Esophagus muscularis mucosa (tissue), 4 donors: ENCODE measurements at regions of chr20 and their contacts with region 1.

Region 1: DNA sequence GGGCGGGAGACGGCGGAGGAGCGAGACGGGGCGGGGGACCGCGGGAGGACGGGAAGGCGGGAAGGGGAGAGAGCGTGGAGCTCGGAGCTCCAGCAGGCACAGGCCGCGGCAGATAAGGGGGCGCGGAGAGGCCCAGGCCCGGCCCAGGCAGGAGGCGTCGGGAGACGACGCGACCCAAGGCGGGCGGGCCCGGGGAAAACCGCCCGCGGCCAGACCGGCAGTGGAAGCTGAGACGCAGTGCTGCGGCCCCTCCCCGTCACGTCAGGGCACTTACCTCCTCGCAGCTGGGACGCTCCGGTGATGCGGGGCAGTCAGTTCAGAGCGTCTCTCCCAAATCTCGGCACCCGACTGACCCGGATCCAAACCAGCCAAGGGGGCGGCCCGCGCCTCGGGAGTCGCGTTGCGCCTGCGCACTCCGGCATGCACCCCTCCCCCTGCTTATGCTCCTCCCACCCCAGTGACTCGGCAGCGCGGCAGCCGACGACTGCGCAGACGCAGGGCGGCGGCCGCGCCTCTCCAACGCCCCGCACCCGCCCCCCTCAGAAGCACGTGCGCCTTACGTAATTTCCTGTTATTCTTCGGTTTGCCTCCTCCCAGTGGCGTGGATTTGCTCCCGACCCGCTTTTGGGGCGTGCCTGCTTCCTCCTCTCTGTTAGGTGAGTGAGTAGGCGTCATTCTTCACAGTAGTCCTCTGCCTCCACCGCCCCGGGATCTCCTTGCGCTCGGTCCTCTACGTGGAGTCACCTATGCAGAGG is at the start of gene OSER1:
- DNase-seq: peak; percentile 100
- H3K4me3 ChIP-seq: peak within 1 kb of the TSS; percentile 81 to 94 (median 92)
- H3K27ac ChIP-seq: peak within 1 kb of the TSS; percentile 96 to 99 (median 98)
- H3K4me1 ChIP-seq: peaks cover 51 to 71% (median 57%) of the 10 kb centered on the region in 4 donors
- H3K27me3 ChIP-seq: no peaks in the 10 kb centered on the region
- CTCF ChIP-seq: peak in 1 of 3 experiments; percentile 16
- EP300 ChIP-seq: no peak
- POLR2A ChIP-seq: peak; percentile 93
- total RNA-seq, gene OSER1: 45.2 to 94.4 (median 71.0) TPM

Region 2: DNA sequence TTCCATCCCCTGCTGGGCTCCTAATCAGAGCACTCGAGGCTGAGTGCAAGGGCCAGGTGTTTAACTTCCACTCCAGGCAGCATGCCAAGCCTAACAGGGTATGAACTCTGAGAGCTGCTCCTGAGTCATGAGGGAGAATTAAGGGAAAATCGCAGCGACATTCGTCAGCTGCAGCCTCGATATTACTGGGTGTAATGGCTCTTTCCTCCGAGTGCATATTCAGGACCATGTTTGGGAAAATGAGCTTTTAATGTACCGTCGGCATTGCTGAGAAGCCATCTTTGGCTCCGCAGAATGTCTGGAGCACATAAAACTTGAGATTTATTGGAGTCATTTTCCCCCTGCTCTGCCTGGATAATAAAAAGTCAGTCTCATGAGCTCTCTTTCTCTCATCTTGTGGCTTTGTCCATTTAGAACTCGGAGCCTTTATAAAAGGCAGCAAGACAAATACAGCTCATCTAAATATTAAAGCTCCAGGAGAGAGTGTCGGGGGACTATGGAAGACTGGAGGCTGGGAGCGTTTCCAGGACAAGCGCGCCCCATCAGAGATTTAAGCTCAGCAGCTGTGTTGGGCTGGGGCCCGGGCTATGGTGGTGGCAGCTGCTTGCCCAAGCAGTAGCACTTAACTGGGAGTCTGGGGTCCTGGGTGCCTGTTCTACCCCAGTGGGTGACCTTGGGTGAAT is 192.2 kb before region 1 on chr20:
- intact Hi-C with region 1: loop called (anchors 10 kb)
- DNase-seq: no peak
- H3K4me3 ChIP-seq: peak overlapping the region in 3 of 4 donors; percentile 12 to 29 (median 26)
- H3K27ac ChIP-seq: peak overlapping the region; percentile 64 to 89 (median 77)
- H3K4me1 ChIP-seq: peaks cover 3 to 65% (median 64%) of the 10 kb centered on the region in 4 donors
- H3K27me3 ChIP-seq: no peaks in the 10 kb centered on the region
- CTCF ChIP-seq: no peak
- EP300 ChIP-seq: no peak
- POLR2A ChIP-seq: no peak

Region 3: DNA sequence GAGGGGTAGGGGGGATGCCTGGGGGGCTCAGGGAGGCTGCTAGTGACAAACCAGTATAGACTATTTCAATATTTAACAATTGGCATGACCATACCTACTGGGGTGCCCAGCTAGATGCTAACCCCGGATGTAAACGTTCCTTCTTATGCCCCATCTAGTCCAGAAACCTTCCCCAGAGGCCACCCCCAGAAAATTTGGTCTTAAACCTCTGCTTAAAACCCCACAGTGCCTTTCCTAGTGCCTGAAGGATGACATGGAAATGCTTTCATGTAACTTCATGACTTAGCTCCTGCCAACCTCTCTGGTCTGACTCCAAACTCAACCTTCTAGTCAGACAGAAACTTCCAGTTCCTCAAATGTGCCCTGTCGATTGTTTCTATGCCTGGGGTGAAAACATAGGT is 75.6 kb before region 1 on chr20:
- intact Hi-C with region 1: no loop called
- DNase-seq: no peak
- H3K4me3 ChIP-seq: no peak overlapping the region
- H3K27ac ChIP-seq: peak overlapping the region; percentile 85 to 95 (median 92)
- H3K4me1 ChIP-seq: peaks cover 37 to 78% (median 66%) of the 10 kb centered on the region in 4 donors
- H3K27me3 ChIP-seq: no peaks in the 10 kb centered on the region
- CTCF ChIP-seq: no peak
- EP300 ChIP-seq: no peak
- POLR2A ChIP-seq: no peak

Region 4: GRCh38 chr20:44279228-44279627 is 68.6 kb after region 1 on chr20:
- intact Hi-C with region 1: no loop called
- DNase-seq: no peak
- H3K4me3 ChIP-seq: no peak overlapping the region
- H3K27ac ChIP-seq: no peak overlapping the region
- H3K4me1 ChIP-seq: no peaks in the 10 kb centered on the region
- H3K27me3 ChIP-seq: no peaks in the 10 kb centered on the region
- CTCF ChIP-seq: no peak
- EP300 ChIP-seq: no peak
- POLR2A ChIP-seq: no peak

Region 5: GRCh38 chr20:44388466-44389023 is 177.9 kb after region 1 on chr20:
- intact Hi-C with region 1: loop called (anchors 10 kb)
- DNase-seq: no peak
- H3K4me3 ChIP-seq: peak overlapping the region in 1 of 4 donors; percentile 7
- H3K27ac ChIP-seq: no peak overlapping the region
- H3K4me1 ChIP-seq: peaks cover 0 to 9% (median 8%) of the 10 kb centered on the region in 4 donors
- H3K27me3 ChIP-seq: peaks cover 0 to 55% (median 0%) of the 10 kb centered on the region in 4 donors
- CTCF ChIP-seq: peak; percentile 49 to 84 (median 64)
- EP300 ChIP-seq: no peak
- POLR2A ChIP-seq: no peak

Region 6: GRCh38 chr20:44521484-44522481 is 311.2 kb after region 1 on chr20 and contains the start of gene SERINC3:
- intact Hi-C with region 1: loop called (anchors 10 kb)
- DNase-seq: peak; percentile 99
- H3K4me3 ChIP-seq: peak within 1 kb of the TSS; percentile 83 to 94 (median 86)
- H3K27ac ChIP-seq: peak within 1 kb of the TSS; percentile 98 to 99 (median 98)
- H3K4me1 ChIP-seq: peaks cover 43 to 51% (median 49%) of the 10 kb centered on the region in 4 donors
- H3K27me3 ChIP-seq: no peaks in the 10 kb centered on the region
- CTCF ChIP-seq: peak in 1 of 3 experiments; percentile 11
- EP300 ChIP-seq: peak; percentile 86
- POLR2A ChIP-seq: peak; percentile 88
- total RNA-seq, gene SERINC3: 121 to 175 (median 138) TPM

Region 7: GRCh38 chr20:44885392-44886265 is 675.0 kb after region 1 on chr20 and contains the start of gene YWHAB:
- intact Hi-C with region 1: loop called (anchors 10 kb)
- DNase-seq: peak; percentile 100
- H3K4me3 ChIP-seq: peak within 1 kb of the TSS; percentile 83 to 98 (median 90)
- H3K27ac ChIP-seq: peak within 1 kb of the TSS; percentile 95 to 99 (median 98)
- H3K4me1 ChIP-seq: peaks cover 43 to 55% (median 53%) of the 10 kb centered on the region in 4 donors
- H3K27me3 ChIP-seq: no peaks in the 10 kb centered on the region
- CTCF ChIP-seq: peak in 1 of 3 experiments; percentile 45
- EP300 ChIP-seq: no peak
- POLR2A ChIP-seq: peak; percentile 70
- total RNA-seq, gene YWHAB: 121 to 140 (median 130) TPM